PC-3 (cell line): ENCODE measurements at regions of chr19 and their contacts with region 1.

Region 1: DNA sequence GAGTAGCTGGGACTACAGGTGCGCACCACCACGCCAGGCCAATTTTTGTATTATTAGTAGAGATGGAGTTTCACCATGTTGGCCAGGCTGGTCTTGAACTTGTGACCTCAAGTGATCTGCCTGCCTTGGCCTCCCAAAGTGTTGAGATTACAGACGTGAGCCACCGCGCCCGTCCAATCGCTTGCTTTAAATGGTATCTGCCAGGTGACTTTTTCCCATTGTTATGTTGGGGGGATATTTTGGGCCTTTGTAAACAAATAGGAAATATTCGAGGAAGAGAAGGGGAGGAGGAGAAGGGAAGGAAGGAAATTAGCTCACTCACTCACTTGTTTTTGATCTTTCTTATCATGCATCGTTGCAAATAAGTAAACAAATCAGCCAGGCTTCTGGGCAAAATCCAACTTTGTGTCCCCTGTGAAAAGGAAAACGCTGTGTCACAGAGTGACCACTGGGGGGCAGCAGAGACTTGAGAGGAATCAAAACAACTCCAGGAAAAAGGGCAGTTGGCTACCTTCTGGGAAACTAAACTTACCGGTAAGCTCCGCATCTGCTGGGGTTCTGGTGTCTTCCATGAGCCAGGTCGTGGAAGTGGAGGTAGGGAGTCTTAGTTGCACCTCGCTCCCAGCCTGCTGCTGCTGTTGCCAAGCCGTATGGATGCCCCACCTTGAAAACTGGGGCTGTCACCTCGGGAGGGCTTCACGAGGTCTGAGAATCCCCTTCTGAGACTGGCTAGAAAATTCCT is 9.3 kb upstream of the RANBP3 start:
- DNase-seq: peak; percentile 96
- ATAC-seq: peak; percentile 57
- H3K4me3 ChIP-seq: peak overlapping the region; percentile 57
- H3K27ac ChIP-seq: no peak overlapping the region
- H3K4me1 ChIP-seq: peaks cover 9% of the 10 kb centered on the region; the same call in 1 of the 2 replicates
- H3K27me3 ChIP-seq: no peaks in the 10 kb centered on the region
- CTCF ChIP-seq: peak; percentile 99

Region 2: DNA sequence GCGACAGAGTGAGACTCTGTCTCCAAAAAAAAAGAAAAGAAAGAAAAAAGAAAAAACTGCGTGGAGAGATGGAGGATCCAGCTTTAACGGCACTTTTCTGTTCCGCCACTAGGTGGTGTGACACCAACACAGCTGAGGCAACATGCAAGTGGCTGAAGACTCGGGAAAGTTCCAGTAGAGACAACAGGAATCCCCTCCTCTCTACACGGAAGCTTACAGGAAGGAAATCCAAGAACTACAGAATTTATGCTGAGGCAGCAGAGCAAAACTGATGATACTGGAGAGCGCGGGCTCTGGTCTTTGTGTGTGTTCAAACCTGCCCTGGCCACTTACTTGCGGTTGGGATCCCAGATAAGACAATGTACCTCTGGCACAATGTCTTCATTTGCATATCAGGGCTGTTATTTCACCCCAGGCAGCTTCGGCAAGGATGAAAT is 19.2 kb before region 1 on chr19:
- CTCF ChIA-PET with region 1: interaction called, 5 read pairs
- POLR2A ChIA-PET with region 1: no interaction called
- intact Hi-C with region 1: loop called (anchors 1 kb)
- DNase-seq: peak; percentile 81
- ATAC-seq: peak; percentile 88
- H3K4me3 ChIP-seq: no peak overlapping the region
- H3K27ac ChIP-seq: no peak overlapping the region
- H3K4me1 ChIP-seq: no peaks in the 10 kb centered on the region; the same call in 1 of the 2 replicates
- H3K27me3 ChIP-seq: no peaks in the 10 kb centered on the region
- CTCF ChIP-seq: peak; percentile 92

Region 3: DNA sequence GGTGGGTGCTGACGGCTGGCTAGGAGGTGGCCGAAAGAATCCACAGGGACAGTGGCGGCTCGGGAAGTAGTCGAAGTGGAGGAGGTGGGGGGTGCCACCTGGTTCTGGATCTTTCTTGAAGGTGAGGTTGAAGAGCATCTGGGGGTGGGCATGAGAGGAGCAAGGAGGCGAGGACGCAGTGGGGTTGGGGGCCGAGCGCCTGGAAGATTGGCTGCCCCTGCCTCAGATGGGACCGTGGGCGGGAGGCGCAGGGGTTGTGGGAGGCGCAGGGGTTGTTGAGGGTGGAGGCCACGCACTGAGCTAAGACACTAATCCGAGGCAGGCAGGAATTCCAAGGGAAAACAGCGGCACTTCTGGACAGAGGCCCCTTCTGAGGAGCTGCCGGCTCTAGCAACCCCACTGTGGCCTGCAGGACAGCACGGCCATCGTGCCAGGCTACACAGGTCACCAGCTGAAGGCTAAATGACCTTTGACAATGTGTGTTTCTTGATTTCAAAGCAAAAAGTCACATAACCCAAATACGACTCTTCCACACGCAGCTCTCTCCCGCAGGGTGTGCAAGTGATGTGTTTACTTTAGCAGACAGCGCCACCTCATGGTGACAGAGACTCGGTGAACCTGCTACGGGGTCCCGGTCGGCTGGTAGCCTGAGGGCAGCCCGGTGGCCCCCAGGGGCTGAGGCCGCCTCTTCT is 34.8 kb after region 1 on chr19:
- CTCF ChIA-PET with region 1: interaction called, 42 read pairs
- POLR2A ChIA-PET with region 1: no interaction called
- intact Hi-C with region 1: loop called (anchors 1 kb)
- DNase-seq: peak; percentile 85
- ATAC-seq: peak; percentile 92
- H3K4me3 ChIP-seq: no peak overlapping the region
- H3K27ac ChIP-seq: no peak overlapping the region
- H3K4me1 ChIP-seq: peaks cover 35% of the 10 kb centered on the region
- H3K27me3 ChIP-seq: no peaks in the 10 kb centered on the region
- CTCF ChIP-seq: peak; percentile 93

Region 4: GRCh38 chr19:6048808-6049405 is 61.7 kb after region 1 on chr19:
- CTCF ChIA-PET with region 1: interaction called, 18 read pairs
- POLR2A ChIA-PET with region 1: no interaction called
- intact Hi-C with region 1: loop called (anchors 1 kb)
- DNase-seq: peak; percentile 93
- ATAC-seq: peak; percentile 98
- H3K4me3 ChIP-seq: peak overlapping the region; percentile 33
- H3K27ac ChIP-seq: no peak overlapping the region
- H3K4me1 ChIP-seq: peaks cover 9% of the 10 kb centered on the region
- H3K27me3 ChIP-seq: no peaks in the 10 kb centered on the region
- CTCF ChIP-seq: peak; percentile 91

Region 5: DNA sequence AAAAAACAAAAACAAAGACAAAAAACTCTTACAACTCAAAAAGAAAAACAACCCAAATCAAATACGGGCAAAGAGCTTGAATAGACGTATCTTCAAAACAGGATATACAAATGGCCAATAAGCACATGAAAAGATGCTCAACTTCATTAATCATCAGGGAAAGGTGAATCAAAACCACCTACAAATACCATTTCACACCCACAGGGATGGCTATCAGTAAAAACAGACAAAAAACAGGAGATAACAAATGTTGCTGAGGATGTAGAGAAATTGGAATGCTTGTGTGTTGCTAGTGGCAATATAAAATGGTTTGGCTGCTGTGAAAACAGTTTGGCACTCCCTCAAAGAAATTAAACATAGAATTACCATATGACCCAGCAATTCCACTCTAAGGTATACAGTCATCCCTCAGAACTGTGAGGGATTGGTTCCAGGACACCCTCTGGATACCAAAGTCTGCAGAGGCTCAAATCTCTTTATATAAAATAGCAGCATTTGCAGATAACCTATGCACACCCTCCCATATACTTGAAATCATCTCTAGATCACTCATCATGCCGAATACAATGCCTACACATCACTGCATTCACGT is 262.9 kb after region 1 on chr19:
- CTCF ChIA-PET with region 1: no interaction called
- POLR2A ChIA-PET with region 1: interaction called, 12 read pairs
- intact Hi-C with region 1: no loop called
- DNase-seq: no peak
- ATAC-seq: peak; percentile 31
- H3K4me3 ChIP-seq: no peak overlapping the region
- H3K27ac ChIP-seq: no peak overlapping the region
- H3K4me1 ChIP-seq: no peaks in the 10 kb centered on the region
- H3K27me3 ChIP-seq: no peaks in the 10 kb centered on the region
- CTCF ChIP-seq: no peak